CD4-positive, alpha-beta memory T cell (primary cell): ENCODE measurements at regions of chr3 and their contacts with region 1.

Region 1: GRCh38 chr3:158109804-158110657 is at the start of gene RSRC1:
- DNase-seq: peak; percentile 75 to 84 (median 78)
- H3K4me3 ChIP-seq: peak within 1 kb of the TSS; percentile 59 to 82
- H3K4me3 Mint-ChIP-seq: peak within 1 kb of the TSS; percentile 84 to 100 (median 96)
- H3K27ac ChIP-seq: peak within 1 kb of the TSS; percentile 51
- H3K27ac Mint-ChIP-seq: peak within 1 kb of the TSS; percentile 74 to 98 (median 90)
- H3K4me1 ChIP-seq: peaks cover 50% of the 10 kb centered on the region
- H3K4me1 Mint-ChIP-seq: peaks cover 43 to 78% (median 52%) of the 10 kb centered on the region in 4 donors
- H3K27me3 ChIP-seq: peaks cover 38% of the 10 kb centered on the region
- H3K27me3 Mint-ChIP-seq: peaks cover 29 to 30% of the 10 kb centered on the region in 2 donors
- total RNA-seq, gene RSRC1: 34.1 to 35.7 TPM

Region 2: DNA sequence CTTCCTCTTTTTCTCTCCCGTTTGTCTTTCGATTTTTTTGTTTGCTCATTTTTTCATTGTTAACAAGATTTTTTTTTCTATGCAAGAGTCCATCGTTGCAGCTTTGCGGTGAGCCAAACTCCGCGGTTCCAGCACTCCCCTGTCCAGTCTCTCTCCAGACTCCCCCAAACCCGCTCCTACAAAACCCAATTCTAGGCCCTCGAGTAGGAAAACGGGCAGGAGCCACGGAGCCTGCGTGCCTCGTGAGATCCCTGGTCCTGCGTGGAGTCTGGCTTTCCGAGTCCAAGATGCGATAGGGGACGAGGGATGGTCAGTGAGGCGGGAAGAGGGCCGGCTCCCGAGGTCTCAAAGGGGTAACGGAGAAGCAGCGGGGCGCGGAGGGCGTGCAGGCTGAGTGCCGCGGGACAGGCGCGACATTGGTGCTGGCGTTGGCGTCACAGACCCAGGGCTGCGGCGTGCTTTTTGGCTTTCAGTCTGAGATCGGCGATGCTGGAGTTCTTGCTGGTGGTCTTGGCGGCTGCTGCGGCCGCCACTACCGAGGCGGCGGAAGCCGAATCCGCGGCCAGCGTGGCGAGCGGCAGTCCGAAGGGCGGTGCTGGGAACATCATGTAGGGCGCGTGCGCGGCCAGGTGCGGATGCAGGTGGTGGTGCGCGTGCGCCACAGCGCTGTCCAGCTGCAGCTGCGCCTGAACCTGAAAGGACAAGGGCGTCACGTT is 12.3 kb before region 1 on chr3:
- CTCF ChIA-PET with region 1: interaction called, 4 read pairs
- POLR2A ChIA-PET with region 1: interaction called, 19 read pairs
- intact Hi-C with region 1: loop called (anchors 1 kb)
- DNase-seq: peak; percentile 75 to 81 (median 79)
- H3K4me3 ChIP-seq: peak overlapping the region; percentile 22 to 68
- H3K4me3 Mint-ChIP-seq: peak overlapping the region; percentile 85 to 95 (median 90)
- H3K27ac ChIP-seq: no peak overlapping the region
- H3K27ac Mint-ChIP-seq: peak overlapping the region in 6 of 7 donors; percentile 17 to 96 (median 86)
- H3K4me1 ChIP-seq: peaks cover 13% of the 10 kb centered on the region
- H3K4me1 Mint-ChIP-seq: peaks cover 6 to 28% (median 16%) of the 10 kb centered on the region in 4 donors
- H3K27me3 ChIP-seq: peaks cover 67% of the 10 kb centered on the region
- H3K27me3 Mint-ChIP-seq: peaks cover 70 to 78% of the 10 kb centered on the region in 2 donors

Region 3: DNA sequence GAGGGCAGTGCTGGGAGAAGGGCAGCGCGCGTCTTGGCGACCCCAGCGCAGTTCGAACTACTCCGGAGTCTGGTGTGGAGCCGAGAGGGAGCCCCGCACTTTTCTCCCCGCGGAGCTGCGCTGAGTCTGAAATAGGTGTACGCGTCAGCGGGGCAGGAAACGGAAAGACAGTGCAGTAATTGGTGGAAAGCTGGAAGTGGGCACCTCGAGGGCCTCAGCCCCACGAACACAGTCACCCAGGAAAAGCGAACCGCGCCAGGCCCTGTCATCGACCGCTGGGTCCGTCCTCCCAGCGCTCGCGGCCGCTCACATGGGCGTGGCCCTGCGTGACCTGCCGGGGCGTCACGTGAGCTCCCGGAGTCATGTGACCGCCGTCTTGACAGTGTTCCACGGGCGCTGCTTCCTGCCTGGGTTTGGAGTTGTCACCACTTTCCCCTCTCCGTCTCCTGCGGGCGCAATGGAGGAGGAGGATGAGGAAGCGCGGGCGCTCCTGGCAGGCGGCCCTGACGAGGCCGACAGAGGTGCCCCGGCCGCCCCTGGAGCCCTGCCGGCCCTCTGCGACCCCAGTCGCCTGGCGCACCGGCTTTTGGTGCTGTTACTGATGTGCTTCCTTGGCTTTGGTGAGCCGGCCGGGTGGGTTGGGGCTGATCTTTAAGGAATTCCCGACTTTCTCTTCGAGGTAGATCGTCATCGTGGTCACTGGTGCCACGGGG is 691.8 kb after region 1 on chr3 and contains the start of gene MFSD1:
- CTCF ChIA-PET with region 1: no interaction called
- POLR2A ChIA-PET with region 1: no interaction called
- intact Hi-C with region 1: loop called (anchors 5 kb)
- DNase-seq: peak; percentile 86 to 92 (median 88)
- H3K4me3 ChIP-seq: peak within 1 kb of the TSS; percentile 68 to 98
- H3K4me3 Mint-ChIP-seq: peak within 1 kb of the TSS; percentile 89 to 93 (median 92)
- H3K27ac ChIP-seq: peak within 1 kb of the TSS; percentile 63
- H3K27ac Mint-ChIP-seq: peak within 1 kb of the TSS; percentile 71 to 97 (median 94)
- H3K4me1 ChIP-seq: peaks cover 36% of the 10 kb centered on the region
- H3K4me1 Mint-ChIP-seq: peaks cover 24 to 41% (median 35%) of the 10 kb centered on the region in 4 donors
- H3K27me3 ChIP-seq: no peaks in the 10 kb centered on the region
- H3K27me3 Mint-ChIP-seq: no peaks in the 10 kb centered on the region
- total RNA-seq, gene MFSD1: 31.7 to 33.7 TPM